PC-9 (cell line): ENCODE measurements at regions of chr17 and their contacts with region 1.

Region 1: GRCh38 chr17:75515496-75516254 is at the start of gene CASKIN2:
- DNase-seq: peak; percentile 71 to 96
- H3K4me3 ChIP-seq: peak within 1 kb of the TSS; percentile 89
- H3K27ac ChIP-seq: no peak within 1 kb of the TSS
- H3K4me1 ChIP-seq: peaks cover 46% of the 10 kb centered on the region
- H3K27me3 ChIP-seq: no peaks in the 10 kb centered on the region
- CTCF ChIP-seq: peak; percentile 95
- total RNA-seq, gene CASKIN2: 24.4 and 25.4 TPM in 2 replicates

Region 2: DNA sequence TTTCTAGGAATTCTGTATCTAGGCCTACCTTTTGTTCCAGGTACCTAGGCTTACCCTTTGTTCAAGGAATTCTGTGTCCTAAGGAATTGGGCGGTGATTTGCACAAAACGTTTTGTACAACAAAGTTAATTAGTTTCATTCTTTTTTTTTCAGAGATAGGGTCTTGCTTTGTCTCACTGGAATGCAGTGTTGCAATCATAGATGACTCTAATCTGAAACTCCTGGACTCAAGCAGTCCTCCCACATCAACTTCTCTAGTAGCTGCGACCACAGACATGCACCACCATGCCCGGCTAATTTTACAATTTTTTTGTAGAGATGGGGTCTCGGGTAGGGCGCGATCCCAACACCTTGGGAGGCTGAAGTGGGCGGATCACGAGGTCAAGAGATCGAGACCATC is 521.2 kb before region 1 on chr17:
- CTCF ChIA-PET with region 1: no interaction called
- POLR2A ChIA-PET with region 1: no interaction called
- intact Hi-C with region 1: no loop called
- DNase-seq: no peak
- H3K4me3 ChIP-seq: no peak overlapping the region
- H3K27ac ChIP-seq: peak overlapping the region; percentile 80
- H3K4me1 ChIP-seq: peaks cover 32% of the 10 kb centered on the region
- H3K27me3 ChIP-seq: no peaks in the 10 kb centered on the region
- CTCF ChIP-seq: no peak

Region 3: DNA sequence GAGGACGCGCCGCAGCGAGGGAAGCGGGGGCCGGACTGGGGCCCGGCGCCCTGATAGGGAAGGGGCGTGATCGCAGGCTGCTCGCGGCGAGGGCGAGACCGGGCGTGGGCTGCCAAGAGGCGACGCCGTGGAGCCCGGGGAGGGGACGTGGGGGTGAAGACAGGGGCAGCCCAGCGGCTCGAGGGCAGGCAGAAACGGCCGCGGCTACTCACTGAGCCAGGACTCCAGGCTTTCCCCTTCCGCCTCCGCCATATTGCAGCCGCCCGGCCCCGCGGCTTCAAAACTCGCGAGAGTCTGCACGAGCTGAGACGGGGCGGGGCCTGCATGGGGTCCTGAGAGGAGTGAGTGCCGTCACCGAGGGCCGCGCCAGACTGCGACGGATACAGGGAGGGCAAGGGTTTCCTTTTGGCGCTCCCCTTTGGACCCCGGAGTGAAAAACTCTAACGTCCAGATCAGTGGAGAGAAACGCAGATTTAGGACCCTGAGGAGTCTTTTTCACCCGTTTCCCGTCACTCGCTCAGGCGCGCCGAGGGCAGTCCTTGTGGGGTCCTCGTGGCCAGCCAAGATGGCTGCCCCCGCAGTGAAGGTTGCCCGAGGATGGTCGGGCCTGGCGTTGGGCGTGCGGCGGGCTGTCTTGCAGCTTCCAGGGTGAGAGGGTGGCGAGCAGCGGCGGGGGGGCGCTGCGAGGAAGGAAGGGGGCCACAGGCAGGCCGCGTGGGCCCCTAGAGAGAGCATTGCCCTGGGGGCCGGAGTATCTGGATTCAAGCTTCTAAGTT is 254.2 kb before region 1 on chr17 and contains the starts of genes GGA3 and MRPS7:
- CTCF ChIA-PET with region 1: no interaction called
- POLR2A ChIA-PET with region 1: no interaction called
- intact Hi-C with region 1: loop called (anchors 10 kb)
- DNase-seq: peak; percentile 80 to 93
- H3K4me3 ChIP-seq: peak within 1 kb of the TSS; percentile 86
- H3K27ac ChIP-seq: peak within 1 kb of the TSS; percentile 88
- H3K4me1 ChIP-seq: peaks cover 21% of the 10 kb centered on the region
- H3K27me3 ChIP-seq: no peaks in the 10 kb centered on the region
- CTCF ChIP-seq: no peak
- total RNA-seq, gene GGA3: 34.8 and 37.5 TPM in 2 replicates
- total RNA-seq, gene MRPS7: 50.1 and 51.3 TPM in 2 replicates

Region 4: DNA sequence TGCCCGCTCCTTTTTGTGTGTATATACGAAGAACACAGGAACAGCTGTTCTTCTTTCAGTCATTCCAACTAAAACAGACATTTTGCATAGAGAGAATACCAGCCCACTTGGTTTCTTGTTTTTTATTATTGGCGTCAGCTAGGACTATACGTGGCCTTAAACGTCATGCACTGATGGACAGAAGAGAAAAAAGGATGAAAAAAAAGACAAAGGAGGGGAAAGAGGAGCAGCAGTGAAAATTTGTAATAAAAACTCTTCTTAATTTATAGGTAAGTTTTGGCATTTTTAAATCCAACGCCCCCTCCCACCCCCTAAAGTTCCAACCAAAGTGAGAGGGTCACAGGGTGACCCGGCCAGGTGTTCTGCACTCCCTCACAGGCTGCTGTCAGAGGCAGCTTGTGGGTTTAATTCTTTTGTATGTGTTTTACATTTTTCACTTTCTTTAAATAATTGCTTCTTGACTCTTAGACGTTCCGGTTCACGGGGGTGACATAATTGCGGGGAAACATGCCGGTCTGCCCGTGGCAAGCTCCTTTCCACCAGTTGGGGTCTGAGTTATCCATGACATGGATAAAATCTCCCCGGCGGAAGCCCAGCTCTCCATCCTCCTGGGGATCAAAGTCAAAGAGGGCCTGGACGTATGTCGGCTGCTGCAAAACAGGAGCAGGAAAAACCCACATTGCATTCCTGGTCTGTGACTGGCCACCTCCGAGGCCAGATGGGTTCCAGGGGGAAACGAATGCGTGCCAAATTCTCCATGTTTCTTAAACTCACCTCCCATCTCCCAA is 195.6 kb before region 1 on chr17:
- CTCF ChIA-PET with region 1: no interaction called
- POLR2A ChIA-PET with region 1: no interaction called
- intact Hi-C with region 1: loop called (anchors 5 kb)
- DNase-seq: no peak
- H3K4me3 ChIP-seq: no peak overlapping the region
- H3K27ac ChIP-seq: no peak overlapping the region
- H3K4me1 ChIP-seq: no peaks in the 10 kb centered on the region
- H3K27me3 ChIP-seq: no peaks in the 10 kb centered on the region
- CTCF ChIP-seq: no peak

Region 5: DNA sequence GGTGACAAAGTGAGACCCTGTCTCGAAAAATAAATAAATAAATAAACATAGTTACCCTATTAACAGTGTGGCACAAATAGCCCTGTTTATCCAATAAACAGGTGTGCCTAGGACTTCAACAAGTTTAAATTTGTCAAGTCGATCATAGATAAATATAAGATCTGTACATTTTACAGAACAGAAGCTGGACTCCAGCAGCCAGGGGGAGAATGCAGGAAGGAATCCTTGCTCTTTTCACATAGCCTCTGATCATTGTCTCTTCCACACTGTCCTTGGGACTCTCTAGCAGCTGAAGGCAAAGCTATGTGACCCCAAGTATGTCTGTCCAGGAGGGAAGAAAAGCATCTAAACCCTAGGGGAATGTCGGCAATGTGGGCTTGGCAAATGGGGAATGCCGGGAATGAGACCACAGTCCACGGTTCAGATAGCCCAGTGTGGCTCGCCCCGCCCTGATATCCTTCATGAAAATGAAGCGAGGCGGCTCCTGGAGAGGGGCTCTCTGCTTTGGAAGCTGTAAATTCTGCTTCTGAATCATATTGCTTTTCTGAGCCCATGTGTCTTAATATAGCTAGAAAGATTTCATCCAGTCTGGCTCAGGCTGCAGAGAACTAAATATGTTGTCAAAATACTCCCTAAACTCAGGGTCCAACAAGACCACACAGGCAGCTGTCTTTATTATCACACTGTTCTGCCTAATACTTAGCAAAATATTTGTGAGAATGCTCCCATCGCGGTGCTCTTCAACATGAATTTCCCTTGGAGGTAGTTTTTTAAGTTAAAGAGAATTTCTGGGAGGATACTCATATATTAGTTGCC is 85.3 kb before region 1 on chr17:
- CTCF ChIA-PET with region 1: interaction called, 4 read pairs
- POLR2A ChIA-PET with region 1: interaction called, 6 read pairs
- intact Hi-C with region 1: loop called (anchors 1 kb)
- DNase-seq: peak in 1 of 2 experiments; percentile 75
- H3K4me3 ChIP-seq: no peak overlapping the region
- H3K27ac ChIP-seq: no peak overlapping the region
- H3K4me1 ChIP-seq: peaks cover 17% of the 10 kb centered on the region
- H3K27me3 ChIP-seq: no peaks in the 10 kb centered on the region
- CTCF ChIP-seq: no peak

Region 6: DNA sequence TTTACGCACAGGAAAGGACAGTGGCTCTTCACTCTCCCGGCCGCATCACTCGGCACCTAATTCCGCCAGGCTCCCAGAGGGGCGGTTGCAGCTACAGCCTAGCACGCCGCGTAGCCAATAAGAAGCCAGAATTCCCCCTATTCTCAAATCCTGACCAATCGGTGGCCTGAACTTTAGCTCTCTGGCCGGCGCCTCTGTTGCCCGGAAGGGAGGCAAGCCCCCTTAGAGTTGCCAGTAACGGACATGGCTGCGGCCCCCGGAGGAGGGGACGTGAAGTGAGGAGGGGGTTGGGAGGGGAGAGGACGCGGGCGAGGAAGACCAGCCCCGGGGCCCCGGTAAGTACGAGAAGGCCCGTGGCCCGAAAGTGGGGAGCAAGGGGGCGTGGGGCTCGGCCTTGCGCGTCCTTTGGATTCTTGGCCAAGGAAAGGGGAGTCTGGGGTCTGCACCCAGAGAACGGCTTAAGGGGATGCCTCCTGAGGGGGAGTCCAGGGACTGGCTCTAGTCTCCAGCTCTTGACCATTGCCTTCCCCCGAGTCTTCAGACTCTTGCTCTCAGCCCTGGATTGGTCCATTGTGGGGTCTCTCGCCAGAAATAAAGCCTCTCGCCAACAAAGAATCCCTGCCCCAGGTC is 59.1 kb before region 1 on chr17 and contains the start of gene TMEM94:
- CTCF ChIA-PET with region 1: interaction called, 12 read pairs
- POLR2A ChIA-PET with region 1: no interaction called
- intact Hi-C with region 1: no loop called
- DNase-seq: peak; percentile 91 to 92
- H3K4me3 ChIP-seq: peak within 1 kb of the TSS; percentile 88
- H3K27ac ChIP-seq: peak within 1 kb of the TSS; percentile 47
- H3K4me1 ChIP-seq: peaks cover 49% of the 10 kb centered on the region
- H3K27me3 ChIP-seq: no peaks in the 10 kb centered on the region
- CTCF ChIP-seq: no peak
- total RNA-seq, gene TMEM94: 78.9 and 95.7 TPM in 2 replicates

Region 7: GRCh38 chr17:75589012-75589918 is 73.6 kb after region 1 on chr17:
- CTCF ChIA-PET with region 1: no interaction called
- POLR2A ChIA-PET with region 1: no interaction called
- intact Hi-C with region 1: loop called (anchors 1 kb)
- DNase-seq: peak; percentile 51 to 93
- H3K4me3 ChIP-seq: peak overlapping the region; percentile 61
- H3K27ac ChIP-seq: no peak overlapping the region
- H3K4me1 ChIP-seq: no peaks in the 10 kb centered on the region
- H3K27me3 ChIP-seq: no peaks in the 10 kb centered on the region
- CTCF ChIP-seq: no peak; the same call in 1 of the 2 replicates

Region 8: DNA sequence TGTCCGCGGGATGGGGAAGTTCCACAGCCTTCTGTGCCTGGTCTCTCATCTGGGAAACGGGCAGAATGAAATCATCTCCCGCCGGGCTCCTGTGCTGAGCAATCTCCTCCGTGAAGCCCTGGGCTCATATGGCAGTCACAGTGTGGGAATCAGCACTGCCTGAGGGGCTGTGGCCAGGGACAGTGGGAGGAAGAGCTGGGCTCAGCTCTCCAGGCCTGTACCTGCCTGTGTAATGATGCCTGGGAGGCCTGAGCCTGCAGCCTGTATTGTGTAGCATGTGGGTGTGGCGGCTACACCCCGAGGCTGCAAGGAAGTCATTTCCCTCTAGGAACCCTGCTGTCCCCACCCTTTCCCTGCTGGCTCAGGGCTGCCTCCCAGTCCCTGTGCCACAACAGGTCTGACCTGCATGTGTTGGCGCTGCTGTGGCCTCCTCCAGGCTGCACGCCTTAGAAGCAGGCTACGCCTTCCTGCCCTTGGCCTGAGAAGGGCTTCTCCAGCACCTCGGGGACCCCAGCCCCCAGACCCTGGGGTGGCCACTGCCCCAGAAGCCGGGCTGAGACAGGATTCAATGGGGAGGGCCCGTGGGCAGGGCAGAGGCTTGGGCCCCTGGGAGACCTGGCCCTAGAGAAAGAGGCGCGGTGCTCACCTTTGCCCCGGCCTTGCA is 207.6 kb after region 1 on chr17:
- CTCF ChIA-PET with region 1: no interaction called
- POLR2A ChIA-PET with region 1: no interaction called
- intact Hi-C with region 1: no loop called
- DNase-seq: peak; percentile 92 to 94
- H3K4me3 ChIP-seq: peak overlapping the region; percentile 96
- H3K27ac ChIP-seq: peak overlapping the region; percentile 37
- H3K4me1 ChIP-seq: peaks cover 28% of the 10 kb centered on the region
- H3K27me3 ChIP-seq: no peaks in the 10 kb centered on the region
- CTCF ChIP-seq: no peak